Common myeloid progenitor, CD34-positive (primary cell): ENCODE measurements at regions of chr14 and their contacts with region 1.

Region 1: GRCh38 chr14:24188251-24189058 is at the start of gene IPO4:
- DNase-seq: peak; percentile 98
- H3K4me3 ChIP-seq: peak within 1 kb of the TSS; percentile 65 to 90 (median 79)
- H3K27ac ChIP-seq: peak within 1 kb of the TSS; percentile 46 to 77
- H3K4me1 ChIP-seq: peaks cover 0 to 25% (median 20%) of the 10 kb centered on the region in 4 experiments
- H3K27me3 ChIP-seq: no peaks in the 10 kb centered on the region

Region 2: DNA sequence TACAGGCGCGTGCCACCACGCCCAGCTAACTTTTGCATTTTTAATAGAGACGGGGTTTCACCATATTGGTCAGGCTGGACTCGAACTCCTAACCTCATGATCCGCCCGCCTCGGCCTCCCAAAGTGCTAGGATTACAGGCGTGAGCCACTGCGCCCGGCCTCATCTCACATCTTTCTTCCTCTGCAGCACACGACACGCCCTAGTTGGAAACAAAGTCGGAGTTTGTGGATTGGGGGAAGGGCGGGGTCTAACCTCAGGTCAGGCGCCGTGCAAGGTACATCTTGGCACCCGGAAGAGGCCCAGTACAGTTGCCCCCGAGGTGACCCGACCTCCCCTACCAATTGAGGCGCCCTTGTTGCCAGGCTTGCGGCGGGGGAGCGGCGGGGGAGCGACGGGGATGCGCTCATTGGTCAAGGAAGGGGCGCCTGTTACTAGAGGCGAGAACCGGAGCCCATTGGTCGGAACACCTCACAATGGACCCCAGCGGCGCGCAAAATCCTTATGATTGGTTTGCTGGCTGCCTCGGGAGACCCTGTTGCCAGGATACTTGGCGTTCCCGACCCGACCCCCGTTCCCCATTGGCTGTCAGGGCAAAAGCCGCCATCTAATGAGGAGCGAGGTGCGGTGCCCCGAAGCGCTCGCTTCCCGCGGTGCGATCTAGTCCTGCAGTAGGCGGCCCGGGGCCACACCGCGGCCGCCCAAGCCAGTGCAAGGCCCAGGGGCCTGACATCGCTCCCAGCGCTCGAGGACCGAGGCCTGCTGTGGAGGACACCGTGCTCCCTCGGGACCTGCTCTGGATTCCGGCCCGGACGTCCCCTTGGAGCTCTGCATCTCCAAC is 16.8 kb before region 1 on chr14 and contains the start of gene REC8:
- CTCF ChIA-PET with region 1: interaction called, 19 read pairs
- POLR2A ChIA-PET with region 1: no interaction called
- DNase-seq: peak; percentile 97 to 99 (median 99)
- H3K4me3 ChIP-seq: peak within 1 kb of the TSS; percentile 20 to 95 (median 81)
- H3K27ac ChIP-seq: peak within 1 kb of the TSS in 1 of 2 experiments; percentile 66
- H3K4me1 ChIP-seq: peaks cover 2 to 27% (median 12%) of the 10 kb centered on the region in 4 experiments
- H3K27me3 ChIP-seq: no peaks in the 10 kb centered on the region

Region 3: GRCh38 chr14:24224618-24225071 is 36.2 kb after region 1 on chr14:
- CTCF ChIA-PET with region 1: no interaction called
- POLR2A ChIA-PET with region 1: no interaction called
- DNase-seq: no peak
- H3K4me3 ChIP-seq: no peak overlapping the region
- H3K27ac ChIP-seq: no peak overlapping the region
- H3K4me1 ChIP-seq: no peaks in the 10 kb centered on the region
- H3K27me3 ChIP-seq: no peaks in the 10 kb centered on the region